ENCODE measurements at regions of chr11 and their contacts with region 1.

Region 1: GRCh38 chr11:107689317-107690202 is 22.3 kb downstream of the SLN start:
- DNase-seq: peak; percentile 79
- H3K4me3 Mint-ChIP-seq: no peak overlapping the region
- H3K27ac Mint-ChIP-seq: no peak overlapping the region
- H3K4me1 Mint-ChIP-seq: no peaks in the 10 kb centered on the region
- H3K27me3 Mint-ChIP-seq: no peaks in the 10 kb centered on the region
- CTCF ChIP-seq: peak; percentile 83

Region 2: GRCh38 chr11:107549253-107549953 is 140.2 kb before region 1 on chr11:
- CTCF ChIA-PET with region 1: interaction called, 37 read pairs
- POLR2A ChIA-PET with region 1: interaction called, 6 read pairs
- intact Hi-C with region 1: loop called (anchors 1 kb)
- DNase-seq: peak; percentile 63
- H3K4me3 Mint-ChIP-seq: no peak overlapping the region
- H3K27ac Mint-ChIP-seq: no peak overlapping the region
- H3K4me1 Mint-ChIP-seq: peaks cover 13% of the 10 kb centered on the region
- H3K27me3 Mint-ChIP-seq: no peaks in the 10 kb centered on the region
- CTCF ChIP-seq: peak; percentile 67

Region 3: GRCh38 chr11:107573438-107573837 is 116.1 kb before region 1 on chr11:
- CTCF ChIA-PET with region 1: interaction called, 114 read pairs
- POLR2A ChIA-PET with region 1: interaction called, 5 read pairs
- intact Hi-C with region 1: loop called (anchors 1 kb)
- DNase-seq: no peak
- H3K4me3 Mint-ChIP-seq: no peak overlapping the region
- H3K27ac Mint-ChIP-seq: no peak overlapping the region
- H3K4me1 Mint-ChIP-seq: no peaks in the 10 kb centered on the region
- H3K27me3 Mint-ChIP-seq: peaks cover 15% of the 10 kb centered on the region
- CTCF ChIP-seq: no peak

Region 4: GRCh38 chr11:107598225-107599139 is 91.1 kb before region 1 on chr11:
- CTCF ChIA-PET with region 1: interaction called, 14 read pairs
- POLR2A ChIA-PET with region 1: no interaction called
- intact Hi-C with region 1: no loop called
- DNase-seq: peak; percentile 46
- H3K4me3 Mint-ChIP-seq: no peak overlapping the region
- H3K27ac Mint-ChIP-seq: no peak overlapping the region
- H3K4me1 Mint-ChIP-seq: no peaks in the 10 kb centered on the region
- H3K27me3 Mint-ChIP-seq: peaks cover 95% of the 10 kb centered on the region
- CTCF ChIP-seq: peak; percentile 30

Region 5: GRCh38 chr11:107770551-107770951 is 81.0 kb after region 1 on chr11:
- CTCF ChIA-PET with region 1: interaction called, 38 read pairs
- POLR2A ChIA-PET with region 1: interaction called, 3 read pairs
- intact Hi-C with region 1: loop called (anchors 1 kb)
- DNase-seq: no peak
- H3K4me3 Mint-ChIP-seq: no peak overlapping the region
- H3K27ac Mint-ChIP-seq: no peak overlapping the region
- H3K4me1 Mint-ChIP-seq: no peaks in the 10 kb centered on the region
- H3K27me3 Mint-ChIP-seq: peaks cover 33% of the 10 kb centered on the region
- CTCF ChIP-seq: no peak

Measured in MCF 10A (cell line).